ENCODE measurements at regions of chr20 and their contacts with region 1.

Region 1: DNA sequence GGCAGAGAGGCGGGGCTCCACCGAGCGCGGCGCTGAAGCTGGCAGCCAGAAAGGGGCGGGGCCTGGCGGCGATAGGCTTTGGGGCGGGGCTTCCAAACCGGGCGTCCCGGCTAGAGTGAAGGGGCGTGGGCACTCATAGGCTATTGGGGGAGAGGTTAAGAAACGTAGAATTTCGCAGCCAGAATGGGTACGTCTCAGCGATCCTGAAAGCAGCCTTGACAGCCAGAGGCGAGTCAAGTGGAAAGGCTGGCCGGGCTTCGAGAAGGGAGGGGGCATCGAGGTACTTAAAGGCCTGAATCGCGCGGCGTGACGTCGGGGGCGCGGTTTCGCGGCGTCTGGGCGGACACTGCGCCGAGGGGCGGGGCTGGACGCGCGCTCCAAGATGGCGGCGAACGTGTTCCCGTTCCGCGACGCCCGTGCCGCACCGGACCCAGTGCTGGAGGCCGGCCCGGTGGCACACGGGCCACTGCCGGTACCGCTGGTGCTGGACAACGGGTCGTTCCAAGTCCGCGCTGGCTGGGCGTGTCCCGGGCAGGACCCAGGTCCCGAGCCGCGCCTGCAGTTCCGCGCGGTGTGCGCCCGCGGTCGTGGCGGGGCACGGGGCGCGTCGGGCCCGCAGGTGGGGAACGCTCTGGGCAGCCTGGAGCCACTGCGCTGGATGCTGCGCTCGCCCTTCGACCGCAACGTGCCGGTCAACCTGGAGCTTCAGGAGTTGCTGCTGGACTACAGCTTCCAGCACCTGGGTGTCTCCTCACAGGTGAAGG is at the start of gene ACTR5:
- DNase-seq: peak; percentile 99 to 100
- H3K4me3 ChIP-seq: peak within 1 kb of the TSS; percentile 57
- H3K4me3 Mint-ChIP-seq: peak within 1 kb of the TSS; percentile 81
- H3K27ac Mint-ChIP-seq: peak within 1 kb of the TSS; percentile 85
- H3K4me1 ChIP-seq: peaks cover 14% of the 10 kb centered on the region
- H3K4me1 Mint-ChIP-seq: peaks cover 10% of the 10 kb centered on the region
- H3K27me3 ChIP-seq: no peaks in the 10 kb centered on the region
- H3K27me3 Mint-ChIP-seq: no peaks in the 10 kb centered on the region
- CTCF ChIP-seq: no peak
- total RNA-seq, gene ACTR5: 18.2 and 20.0 TPM in 2 replicates

Region 2: GRCh38 chr20:38730989-38731737 is 17.1 kb before region 1 on chr20:
- CTCF ChIA-PET with region 1: interaction called, 9 read pairs
- POLR2A ChIA-PET with region 1: no interaction called
- intact Hi-C with region 1: loop called (anchors 1 kb)
- DNase-seq: peak; percentile 91 to 93
- H3K4me3 ChIP-seq: peak overlapping the region; percentile 24
- H3K4me3 Mint-ChIP-seq: peak overlapping the region; percentile 69
- H3K27ac Mint-ChIP-seq: no peak overlapping the region
- H3K4me1 ChIP-seq: peaks cover 17% of the 10 kb centered on the region
- H3K4me1 Mint-ChIP-seq: peaks cover 12% of the 10 kb centered on the region
- H3K27me3 ChIP-seq: peaks cover 9% of the 10 kb centered on the region
- H3K27me3 Mint-ChIP-seq: peaks cover 66% of the 10 kb centered on the region
- CTCF ChIP-seq: peak; percentile 100

Measured in Caco-2 (cell line).